Panc1 (cell line): ENCODE measurements at regions of chr10 and their contacts with region 1.

Region 1: GRCh38 chr10:24724381-24725228 is 918 bp upstream of the ARHGAP21 start:
- DNase-seq: peak; percentile 80
- ATAC-seq: peak; percentile 86
- H3K4me3 ChIP-seq: peak overlapping the region; percentile 77 to 89
- H3K27ac ChIP-seq: peak overlapping the region; percentile 86
- H3K4me1 ChIP-seq: no peaks in the 10 kb centered on the region; the same call in 1 of the 2 replicates
- H3K27me3 ChIP-seq: no peaks in the 10 kb centered on the region
- CTCF ChIP-seq: no peak

Region 2: DNA sequence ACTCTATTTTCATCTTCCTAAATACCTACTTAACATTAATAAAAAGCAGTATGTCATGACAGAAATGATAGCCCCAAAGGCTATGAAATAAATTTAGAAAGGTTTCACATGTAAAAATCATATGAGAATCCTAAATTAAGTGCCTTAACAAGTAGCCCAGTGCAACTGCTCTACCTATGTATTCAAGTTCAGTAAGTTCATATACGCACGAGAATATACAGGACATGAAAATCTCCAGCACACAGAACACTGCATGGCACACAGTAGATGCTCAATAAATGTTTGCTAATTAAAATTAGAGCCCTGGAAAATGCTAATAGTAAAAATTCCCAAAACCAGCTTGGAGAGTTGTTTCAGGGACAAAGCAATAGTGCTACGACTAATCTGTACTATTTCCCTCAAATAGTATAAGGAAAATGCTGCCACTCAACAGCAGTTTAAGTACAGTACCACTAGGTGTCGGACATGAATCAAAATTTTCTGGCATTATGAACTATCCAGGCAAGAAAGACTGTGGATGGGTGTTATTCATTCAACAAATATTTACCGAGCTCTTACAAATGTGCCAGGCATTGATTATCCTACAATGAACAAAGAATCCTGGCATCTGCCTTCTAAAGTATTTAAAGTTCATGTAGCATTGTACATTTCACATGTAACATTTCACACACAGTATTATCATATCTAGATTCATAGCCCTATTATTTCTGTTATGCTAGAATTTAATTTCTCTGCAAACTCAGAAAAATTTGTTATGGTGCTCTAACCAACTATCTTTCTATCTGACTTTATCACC is 81.8 kb before region 1 on chr10:
- CTCF ChIA-PET with region 1: no interaction called
- POLR2A ChIA-PET with region 1: no interaction called
- in situ Hi-C with region 1: no loop called
- intact Hi-C with region 1: loop called (anchors 5 kb)
- DNase-seq: peak; percentile 55
- ATAC-seq: peak; percentile 91
- H3K4me3 ChIP-seq: no peak overlapping the region
- H3K27ac ChIP-seq: no peak overlapping the region
- H3K4me1 ChIP-seq: peaks cover 13% of the 10 kb centered on the region
- H3K27me3 ChIP-seq: no peaks in the 10 kb centered on the region
- CTCF ChIP-seq: peak; percentile 68; the same call in 1 of the 2 replicates

Region 3: DNA sequence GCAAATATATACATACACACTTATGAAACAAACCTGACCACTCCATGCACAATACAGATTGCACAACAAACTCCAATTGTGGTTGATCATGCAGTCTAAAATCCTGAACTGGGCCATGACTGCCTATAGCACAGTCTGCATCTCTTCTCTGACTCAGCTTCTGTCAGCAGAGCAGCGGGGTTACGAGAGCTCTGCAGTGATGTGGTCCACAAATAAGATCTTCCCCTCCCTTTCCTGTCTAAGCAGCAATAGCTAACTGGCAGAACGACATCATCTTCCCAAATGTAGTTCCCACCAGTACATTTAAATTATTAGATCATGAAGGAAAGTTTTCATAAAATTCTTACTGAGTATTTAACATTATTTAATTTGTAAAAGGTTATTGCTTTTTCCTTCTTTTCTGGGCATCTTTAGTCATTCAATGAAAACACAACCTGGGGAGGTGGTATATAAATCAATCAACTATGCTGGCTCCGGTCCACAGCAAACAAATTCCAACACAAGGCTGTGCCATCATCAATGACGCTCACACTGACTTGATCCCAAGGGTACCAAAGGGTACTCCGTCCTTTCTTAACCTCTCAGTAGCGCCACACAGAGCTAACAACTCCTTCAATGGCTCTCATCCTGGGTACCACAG is 18.0 kb before region 1 on chr10:
- CTCF ChIA-PET with region 1: no interaction called
- POLR2A ChIA-PET with region 1: interaction called, 12 read pairs
- in situ Hi-C with region 1: no loop called
- intact Hi-C with region 1: no loop called
- DNase-seq: no peak
- ATAC-seq: peak; percentile 66; the same call in 1 of the 2 replicates
- H3K4me3 ChIP-seq: no peak overlapping the region
- H3K27ac ChIP-seq: no peak overlapping the region
- H3K4me1 ChIP-seq: peaks cover 13% of the 10 kb centered on the region
- H3K27me3 ChIP-seq: no peaks in the 10 kb centered on the region
- CTCF ChIP-seq: no peak

Region 4: DNA sequence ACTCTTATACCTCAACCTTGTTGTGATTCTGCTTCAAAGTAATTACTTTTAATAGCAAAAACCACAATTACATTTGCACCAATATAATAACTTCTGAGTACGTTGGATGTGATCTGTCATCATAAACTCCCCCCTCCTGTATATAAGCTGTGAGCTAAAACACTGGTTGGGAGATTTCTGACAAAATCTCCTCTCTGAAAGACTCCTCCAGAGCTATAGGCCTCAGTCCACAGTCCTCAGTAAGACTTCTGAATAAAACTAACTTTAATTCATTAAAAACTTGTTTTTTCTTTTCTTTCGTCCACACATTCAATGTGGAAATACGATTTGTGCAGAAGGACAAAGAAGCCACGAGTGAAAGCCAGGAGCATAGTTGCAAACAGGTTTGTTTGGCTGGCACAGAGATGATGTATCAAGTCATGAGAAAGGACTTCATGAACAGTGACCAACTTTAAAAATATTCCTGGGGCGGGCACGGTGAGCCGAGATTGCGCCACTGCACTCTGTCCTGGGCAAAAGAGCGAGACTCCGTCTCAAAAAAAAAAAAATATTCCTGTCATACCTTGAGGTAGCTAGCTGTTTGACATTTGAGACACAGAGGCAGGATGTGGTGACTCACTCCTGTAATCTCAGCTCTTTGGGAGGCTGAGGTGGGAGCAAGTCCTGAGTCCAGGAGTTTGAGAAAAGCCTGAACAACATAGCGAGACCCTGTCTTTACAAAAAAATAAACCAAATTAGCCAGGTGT is 90.1 kb after region 1 on chr10:
- CTCF ChIA-PET with region 1: no interaction called
- POLR2A ChIA-PET with region 1: no interaction called
- in situ Hi-C with region 1: no loop called
- intact Hi-C with region 1: no loop called
- DNase-seq: peak; percentile 36
- ATAC-seq: peak; percentile 78
- H3K4me3 ChIP-seq: no peak overlapping the region
- H3K27ac ChIP-seq: no peak overlapping the region
- H3K4me1 ChIP-seq: no peaks in the 10 kb centered on the region
- H3K27me3 ChIP-seq: no peaks in the 10 kb centered on the region
- CTCF ChIP-seq: no peak

Region 5: GRCh38 chr10:24952707-24953645 is 228.4 kb after region 1 on chr10:
- CTCF ChIA-PET with region 1: no interaction called
- POLR2A ChIA-PET with region 1: no interaction called
- in situ Hi-C with region 1: no loop called
- intact Hi-C with region 1: loop called (anchors 10 kb)
- DNase-seq: no peak
- ATAC-seq: peak; percentile 75
- H3K4me3 ChIP-seq: peak overlapping the region; percentile 46 to 61
- H3K27ac ChIP-seq: peak overlapping the region; percentile 61
- H3K4me1 ChIP-seq: peaks cover 16% of the 10 kb centered on the region
- H3K27me3 ChIP-seq: no peaks in the 10 kb centered on the region
- CTCF ChIP-seq: peak; percentile 68

Region 6: GRCh38 chr10:25080880-25081581 is 356.4 kb after region 1 on chr10:
- CTCF ChIA-PET with region 1: no interaction called
- POLR2A ChIA-PET with region 1: no interaction called
- in situ Hi-C with region 1: no loop called
- intact Hi-C with region 1: loop called (anchors 10 kb)
- DNase-seq: peak; percentile 80
- ATAC-seq: peak; percentile 96
- H3K4me3 ChIP-seq: no peak overlapping the region
- H3K27ac ChIP-seq: no peak overlapping the region
- H3K4me1 ChIP-seq: no peaks in the 10 kb centered on the region; the same call in 1 of the 2 replicates
- H3K27me3 ChIP-seq: no peaks in the 10 kb centered on the region
- CTCF ChIP-seq: peak; percentile 90

Region 7: DNA sequence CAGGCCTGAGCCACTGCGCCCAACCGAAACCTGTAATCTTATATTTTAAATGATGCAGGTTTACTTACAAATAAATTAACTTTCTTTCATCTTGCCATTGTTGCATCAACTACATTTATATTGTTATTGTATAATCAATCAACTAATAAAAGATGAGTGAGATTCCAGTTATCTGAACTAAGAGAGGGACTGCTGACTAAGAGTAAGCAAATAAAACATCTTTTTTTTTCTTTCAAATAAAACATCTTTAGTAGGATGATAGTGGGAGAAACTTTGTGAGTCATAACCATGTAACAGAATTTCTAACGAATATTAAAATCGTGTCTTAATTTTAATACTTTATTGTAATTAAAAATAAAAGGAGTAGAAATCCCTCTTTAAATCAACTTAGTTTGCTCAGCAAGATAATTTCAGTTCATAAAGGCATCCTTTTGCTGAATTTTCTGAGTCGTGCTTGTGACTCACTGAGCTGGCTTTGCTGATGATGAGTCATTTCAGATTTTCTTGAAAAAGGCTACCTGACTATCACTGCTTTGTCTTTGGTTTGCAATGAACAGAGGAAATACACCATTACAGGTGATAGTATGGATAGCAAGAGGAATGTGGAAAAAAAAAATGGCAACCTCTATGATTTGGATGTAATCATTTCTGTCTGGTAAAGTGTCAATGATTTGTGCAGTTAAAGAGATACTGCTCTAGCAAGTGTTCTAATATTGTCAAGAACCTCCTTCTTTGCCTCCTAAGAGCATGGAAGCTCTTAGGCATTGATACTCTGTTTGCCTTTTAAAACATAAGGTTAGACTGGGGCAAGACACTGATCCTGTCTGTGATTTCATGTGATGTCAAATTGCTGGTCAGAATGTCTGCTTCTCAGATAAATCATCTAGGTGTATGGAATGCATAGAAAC is 569.7 kb after region 1 on chr10:
- CTCF ChIA-PET with region 1: no interaction called
- POLR2A ChIA-PET with region 1: no interaction called
- in situ Hi-C with region 1: no loop called
- intact Hi-C with region 1: no loop called
- DNase-seq: no peak
- ATAC-seq: no peak
- H3K4me3 ChIP-seq: no peak overlapping the region
- H3K27ac ChIP-seq: no peak overlapping the region
- H3K4me1 ChIP-seq: no peaks in the 10 kb centered on the region
- H3K27me3 ChIP-seq: no peaks in the 10 kb centered on the region
- CTCF ChIP-seq: no peak